ENCODE measurements at regions of chrX and their contacts with region 1.

Region 1: GRCh38 chrX:120428309-120428708 is 40.8 kb downstream of the LAMP2 start:
- DNase-seq: no peak
- H3K4me3 ChIP-seq: no peak overlapping the region
- H3K27ac ChIP-seq: peak overlapping the region in 1 of 59 donors; percentile 11
- H3K27me3 ChIP-seq: peaks cover 0 to 51% (median 3%) of the 10 kb centered on the region in 45 donors
- CTCF ChIP-seq: no peak

Region 2: GRCh38 chrX:120238933-120239332 is 189.4 kb before region 1 on chrX:
- intact Hi-C with region 1: no loop called
- DNase-seq: no peak
- H3K4me3 ChIP-seq: no peak overlapping the region
- H3K27ac ChIP-seq: no peak overlapping the region
- H3K27me3 ChIP-seq: peaks cover 0 to 64% (median 7%) of the 10 kb centered on the region in 45 donors
- CTCF ChIP-seq: no peak

Region 3: GRCh38 chrX:120334151-120334550 is 94.2 kb before region 1 on chrX:
- intact Hi-C with region 1: no loop called
- DNase-seq: no peak
- H3K4me3 ChIP-seq: no peak overlapping the region
- H3K27ac ChIP-seq: no peak overlapping the region
- H3K27me3 ChIP-seq: peaks cover 0 to 40% (median 6%) of the 10 kb centered on the region in 45 donors
- CTCF ChIP-seq: peak in 1 of 56 donors; percentile 12

Region 4: GRCh38 chrX:120372667-120373370 is 55.5 kb before region 1 on chrX:
- intact Hi-C with region 1: loop called in 1 of 2 experiments (anchors 10 kb)
- DNase-seq: no peak
- H3K4me3 ChIP-seq: no peak overlapping the region
- H3K27ac ChIP-seq: peak overlapping the region in 1 of 59 donors; percentile 12
- H3K27me3 ChIP-seq: peaks cover 0 to 71% (median 7%) of the 10 kb centered on the region in 45 donors
- CTCF ChIP-seq: no peak

Measured in dorsolateral prefrontal cortex (tissue), 120 donors.